Left colon (tissue), 2 donors: ENCODE measurements at regions of chr2 and their contacts with region 1.

Region 1: GRCh38 chr2:189674374-189675112 is at the start of gene ANKAR:
- DNase-seq: peak; percentile 88 to 93
- ATAC-seq: peak; percentile 99
- total RNA-seq, gene ANKAR: 7.6 to 10.6 TPM

Region 2: GRCh38 chr2:189762551-189763298 is 88.2 kb after region 1 on chr2 and contains the start of gene OSGEPL1:
- intact Hi-C with region 1: loop called in 1 of 2 experiments (anchors 5 kb)
- DNase-seq: peak; percentile 94 to 96
- ATAC-seq: peak; percentile 97
- total RNA-seq, gene OSGEPL1: 2.9 to 3.9 TPM

Region 3: GRCh38 chr2:189783927-189784867 is 109.7 kb after region 1 on chr2 and contains the starts of genes ORMDL1 and PMS1:
- intact Hi-C with region 1: loop called in 1 of 2 experiments (anchors 5 kb)
- DNase-seq: peak; percentile 94 to 95
- ATAC-seq: peak; percentile 96
- total RNA-seq, gene ORMDL1: 40.4 to 46.6 TPM
- total RNA-seq, gene PMS1: 13.7 to 14.8 TPM

Region 4: DNA sequence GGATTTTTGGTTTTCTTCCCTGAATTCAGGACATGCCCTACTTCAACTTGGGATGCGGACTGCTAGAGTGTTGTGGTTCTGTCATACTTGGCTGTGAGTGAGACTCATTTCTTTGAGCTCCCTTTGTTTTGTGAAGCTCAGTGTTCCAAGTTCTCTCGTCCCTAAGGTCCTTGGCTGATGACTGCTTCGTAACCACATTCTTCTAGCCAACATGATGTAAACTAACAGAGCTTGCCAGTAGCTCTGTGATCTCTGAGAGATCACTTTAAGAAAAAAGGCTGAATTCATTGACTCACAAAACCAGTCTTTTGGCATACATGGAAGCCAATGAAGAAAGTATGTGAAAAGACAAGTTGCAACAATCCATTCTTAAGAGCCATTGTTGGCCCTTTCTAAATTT is 484.9 kb after region 1 on chr2:
- intact Hi-C with region 1: no loop called
- DNase-seq: no peak
- ATAC-seq: peak; percentile 23